B cell (primary cell): ENCODE measurements at regions of chr1 and their contacts with region 1.

Region 1: GRCh38 chr1:178716111-178716510 is 8.9 kb upstream of the RALGPS2 start:
- DNase-seq: no peak
- ATAC-seq: no peak
- H3K4me3 ChIP-seq: no peak overlapping the region
- H3K4me3 Mint-ChIP-seq: no peak overlapping the region
- H3K27ac ChIP-seq: no peak overlapping the region
- H3K27ac Mint-ChIP-seq: no peak overlapping the region
- H3K4me1 ChIP-seq: peaks cover 8 to 20% of the 10 kb centered on the region in 2 donors
- H3K4me1 Mint-ChIP-seq: peaks cover 46% of the 10 kb centered on the region
- H3K27me3 ChIP-seq: no peaks in the 10 kb centered on the region
- H3K27me3 Mint-ChIP-seq: no peaks in the 10 kb centered on the region
- CTCF ChIP-seq: no peak

Region 2: GRCh38 chr1:178684542-178685000 is 31.5 kb before region 1 on chr1:
- CTCF ChIA-PET with region 1: no interaction called
- POLR2A ChIA-PET with region 1: no interaction called
- intact Hi-C with region 1: loop called (anchors 5 kb)
- DNase-seq: no peak
- ATAC-seq: peak; percentile 41
- H3K4me3 ChIP-seq: no peak overlapping the region
- H3K4me3 Mint-ChIP-seq: peak overlapping the region; percentile 33
- H3K27ac ChIP-seq: peak overlapping the region in 1 of 2 donors; percentile 47
- H3K27ac Mint-ChIP-seq: peak overlapping the region; percentile 70
- H3K4me1 ChIP-seq: peaks cover 27 to 40% of the 10 kb centered on the region in 2 donors
- H3K4me1 Mint-ChIP-seq: peaks cover 53% of the 10 kb centered on the region
- H3K27me3 ChIP-seq: no peaks in the 10 kb centered on the region
- H3K27me3 Mint-ChIP-seq: no peaks in the 10 kb centered on the region
- CTCF ChIP-seq: no peak

Region 3: DNA sequence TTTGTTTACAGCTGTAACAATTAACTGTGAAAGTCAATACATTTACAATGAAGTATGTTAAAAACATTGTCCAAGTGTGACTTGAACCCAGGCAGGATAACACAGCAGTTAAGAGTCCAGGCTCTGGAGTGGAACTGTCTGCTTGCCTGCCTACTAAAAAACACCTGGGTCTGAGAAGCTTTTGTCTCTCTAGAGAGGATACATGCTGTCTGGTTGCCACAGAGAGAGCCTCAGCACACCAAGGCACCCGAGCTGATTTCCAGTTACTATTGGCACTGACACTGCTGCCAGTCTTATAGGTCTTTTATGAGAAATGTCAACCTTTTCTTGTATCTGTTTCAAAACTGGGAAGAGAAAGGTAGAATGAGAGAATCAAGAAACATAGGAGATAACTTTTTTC is 11.3 kb before region 1 on chr1:
- CTCF ChIA-PET with region 1: interaction called, 4 read pairs
- POLR2A ChIA-PET with region 1: no interaction called
- intact Hi-C with region 1: loop called (anchors 2 kb)
- DNase-seq: no peak
- ATAC-seq: peak; percentile 39
- H3K4me3 ChIP-seq: no peak overlapping the region
- H3K4me3 Mint-ChIP-seq: peak overlapping the region; percentile 70
- H3K27ac ChIP-seq: peak overlapping the region in 1 of 2 donors; percentile 46
- H3K27ac Mint-ChIP-seq: peak overlapping the region; percentile 84
- H3K4me1 ChIP-seq: peaks cover 28% of the 10 kb centered on the region in 2 donors
- H3K4me1 Mint-ChIP-seq: peaks cover 43% of the 10 kb centered on the region
- H3K27me3 ChIP-seq: no peaks in the 10 kb centered on the region
- H3K27me3 Mint-ChIP-seq: no peaks in the 10 kb centered on the region
- CTCF ChIP-seq: no peak